ENCODE measurements at regions of chr18 and their contacts with region 1.

Region 1: DNA sequence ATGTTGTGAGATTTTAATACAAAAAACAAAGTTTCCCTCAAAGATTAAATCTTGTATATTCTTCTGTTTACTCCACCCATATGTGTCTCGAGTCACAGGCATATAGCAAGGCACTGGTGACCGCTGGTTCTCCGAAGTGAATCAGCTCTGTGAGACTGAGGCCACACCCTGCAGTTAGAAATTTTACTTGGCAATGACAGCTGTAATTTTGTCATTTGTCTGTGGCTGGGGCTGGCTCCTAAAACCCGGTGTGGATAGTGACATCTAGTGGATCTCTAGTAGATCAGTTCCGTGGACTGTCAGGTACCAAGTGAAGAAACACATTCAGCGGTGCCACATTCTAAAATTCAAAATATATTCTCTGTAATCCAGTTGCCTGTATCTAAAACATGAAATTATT is 278.0 kb downstream of the NEDD4L start:
- H3K4me3 ChIP-seq: no peak overlapping the region
- H3K27ac ChIP-seq: no peak overlapping the region
- H3K4me1 ChIP-seq: peaks cover 18% of the 10 kb centered on the region
- CTCF ChIP-seq: peak; percentile 67

Region 2: DNA sequence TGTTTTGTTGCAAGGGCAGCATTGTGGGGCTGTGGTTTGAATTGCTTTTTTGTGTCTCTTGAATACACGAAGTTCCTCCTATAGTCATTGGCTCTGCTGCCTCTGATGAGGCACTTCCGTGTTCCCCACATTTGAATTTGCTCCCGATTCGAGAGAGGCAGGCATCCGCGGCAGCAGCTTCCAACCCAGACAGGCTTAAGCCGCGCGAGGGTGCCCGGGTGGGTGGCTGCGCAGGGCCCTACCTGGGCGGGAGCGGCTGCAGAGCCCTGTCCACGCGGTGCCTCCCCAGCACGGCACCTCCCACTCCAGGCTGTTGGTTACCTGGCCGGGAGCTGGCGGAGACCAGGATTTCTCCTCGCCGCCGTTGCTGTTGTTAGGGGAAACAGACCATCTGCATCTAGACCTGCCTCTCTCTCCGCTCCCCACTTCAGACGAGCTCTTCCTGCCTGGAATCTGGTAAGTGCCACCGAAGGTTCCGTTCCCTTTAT is 126.7 kb before region 1 on chr18:
- CTCF ChIA-PET with region 1: interaction called, 17 read pairs
- POLR2A ChIA-PET with region 1: no interaction called
- H3K4me3 ChIP-seq: peak overlapping the region; percentile 1; the same call in 1 of the 2 replicates
- H3K27ac ChIP-seq: no peak overlapping the region
- H3K4me1 ChIP-seq: peaks cover 9% of the 10 kb centered on the region
- CTCF ChIP-seq: no peak

Region 3: GRCh38 chr18:58378411-58379379 is 56.7 kb after region 1 on chr18:
- CTCF ChIA-PET with region 1: no interaction called
- POLR2A ChIA-PET with region 1: no interaction called
- H3K4me3 ChIP-seq: no peak overlapping the region
- H3K27ac ChIP-seq: no peak overlapping the region
- H3K4me1 ChIP-seq: no peaks in the 10 kb centered on the region
- CTCF ChIP-seq: no peak

Region 4: DNA sequence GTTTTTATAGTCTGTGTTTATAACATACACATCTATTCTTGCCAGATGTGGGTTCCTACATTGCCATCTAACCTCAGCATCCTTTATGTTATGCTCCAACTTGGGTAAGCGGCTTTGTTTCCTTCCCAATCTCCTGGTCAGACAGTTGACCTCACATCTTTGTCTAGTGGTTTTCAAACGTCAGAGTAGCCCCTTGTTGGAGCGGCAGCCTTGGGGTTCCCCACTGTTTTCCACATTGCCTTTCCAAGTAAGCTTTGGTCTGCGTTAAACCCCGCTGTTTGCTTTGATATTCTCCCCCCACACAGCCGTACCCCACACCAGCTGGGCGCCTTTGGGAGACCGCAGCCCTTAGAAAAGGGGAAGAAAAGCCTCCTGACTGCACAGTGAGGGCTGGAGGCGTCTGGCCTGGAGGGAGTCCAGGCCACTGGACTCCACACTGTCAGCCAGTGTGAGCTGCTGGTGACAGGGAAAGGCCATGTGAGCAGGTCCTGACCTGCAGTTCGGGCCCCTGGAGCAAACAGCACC is 432.6 kb after region 1 on chr18:
- CTCF ChIA-PET with region 1: no interaction called
- POLR2A ChIA-PET with region 1: no interaction called
- H3K4me3 ChIP-seq: no peak overlapping the region
- H3K27ac ChIP-seq: no peak overlapping the region
- H3K4me1 ChIP-seq: no peaks in the 10 kb centered on the region
- CTCF ChIP-seq: no peak